ENCODE measurements at regions of chr12 and their contacts with region 1.

Region 1: GRCh38 chr12:16939871-16940306 is 333.9 kb upstream of the LMO3 start:
- DNase-seq: peak; percentile 56 to 94
- ATAC-seq: peak; percentile 85 to 97; a peak in 5 of 6 replicates
- H3K4me3 ChIP-seq: no peak overlapping the region
- H3K27ac ChIP-seq: peak overlapping the region; percentile 3 to 54; a peak in 2 of 6 replicates
- H3K4me1 ChIP-seq: no peaks in the 10 kb centered on the region
- CTCF ChIP-seq: peak; percentile 78
- EP300 ChIP-seq: no peak
- POLR2A ChIP-seq: no peak
- RAD21 ChIP-seq: peak; percentile 82 to 95

Region 2: DNA sequence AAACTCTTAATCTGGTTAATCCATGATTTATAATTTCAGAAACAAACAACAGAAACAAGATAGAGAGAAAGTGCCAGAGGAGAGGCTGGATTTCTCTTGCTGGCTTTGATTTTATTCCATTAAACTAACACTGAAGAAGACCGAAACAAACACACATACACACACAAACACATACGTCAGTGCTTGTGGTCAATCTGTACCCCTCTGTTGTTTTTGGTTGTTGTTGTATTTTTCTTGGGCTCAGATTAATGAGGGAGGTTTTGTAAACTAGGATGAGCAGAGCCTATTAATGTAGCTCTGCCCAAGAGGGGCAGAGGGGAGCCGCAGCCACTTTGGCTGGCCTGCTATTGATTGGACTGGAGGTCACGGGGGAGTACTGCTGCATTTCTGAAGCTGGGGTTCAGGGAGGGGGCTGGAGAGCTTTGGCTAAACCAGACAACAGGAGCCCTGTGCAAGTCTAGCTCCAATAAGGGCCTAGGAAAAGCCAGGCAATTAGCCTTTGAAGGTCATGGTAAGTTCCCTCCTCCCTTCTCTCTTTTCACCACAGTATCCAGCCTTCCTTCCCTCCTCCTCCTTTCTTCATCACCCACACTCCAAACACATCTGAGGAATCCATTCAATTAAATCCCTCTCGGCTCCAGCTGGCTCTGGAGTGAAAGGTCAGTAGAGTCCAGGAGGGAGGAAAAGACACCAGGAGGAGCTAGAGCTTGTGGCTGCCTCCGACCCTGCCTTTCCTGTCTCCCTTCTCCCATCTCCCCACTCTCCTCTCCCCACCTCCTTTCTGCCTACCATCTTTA is 10.2 kb after region 1 on chr12:
- CTCF ChIA-PET with region 1: interaction called, 10 read pairs
- POLR2A ChIA-PET with region 1: no interaction called
- DNase-seq: no peak
- ATAC-seq: no peak
- H3K4me3 ChIP-seq: no peak overlapping the region
- H3K27ac ChIP-seq: no peak overlapping the region
- H3K4me1 ChIP-seq: peaks cover 6% of the 10 kb centered on the region
- CTCF ChIP-seq: no peak
- EP300 ChIP-seq: no peak
- POLR2A ChIP-seq: no peak
- RAD21 ChIP-seq: no peak

Region 3: DNA sequence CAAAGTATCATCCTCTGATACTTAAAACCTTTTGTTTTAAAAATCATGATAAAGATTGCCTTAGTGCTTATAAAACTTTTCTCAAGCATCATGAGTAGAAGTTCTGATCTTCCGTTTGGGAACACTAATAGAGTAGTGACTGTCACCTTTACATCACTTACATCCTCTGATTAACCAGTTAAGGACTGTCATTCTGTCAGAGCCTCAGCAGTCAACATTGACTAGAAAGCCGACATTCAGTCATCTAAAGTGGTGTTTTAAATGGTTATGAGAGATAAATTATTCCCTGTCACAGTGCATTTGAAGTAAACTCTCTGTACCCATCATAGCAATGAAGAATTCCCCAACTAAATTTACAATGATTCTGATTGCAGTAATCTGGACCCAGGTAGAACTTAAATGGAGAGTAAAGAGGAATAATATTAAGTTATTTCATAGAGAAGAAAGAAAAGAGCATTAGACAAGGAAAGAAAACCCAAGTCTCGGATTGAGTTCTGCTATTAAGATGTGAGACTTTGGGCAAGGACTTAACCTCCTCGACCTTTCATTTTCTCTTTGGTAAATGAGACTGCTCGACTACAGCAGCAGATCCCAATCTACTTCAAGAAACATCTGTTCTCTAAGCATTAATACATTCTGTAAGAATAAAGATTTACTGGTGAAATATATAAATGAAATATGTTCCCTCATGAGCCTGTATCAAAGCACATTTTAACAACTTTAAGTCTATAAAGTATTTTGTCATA is 230.0 kb after region 1 on chr12:
- CTCF ChIA-PET with region 1: no interaction called
- POLR2A ChIA-PET with region 1: no interaction called
- DNase-seq: no peak
- ATAC-seq: no peak
- H3K4me3 ChIP-seq: no peak overlapping the region
- H3K27ac ChIP-seq: no peak overlapping the region
- H3K4me1 ChIP-seq: no peaks in the 10 kb centered on the region
- CTCF ChIP-seq: no peak
- EP300 ChIP-seq: no peak
- POLR2A ChIP-seq: no peak
- RAD21 ChIP-seq: no peak

Region 4: DNA sequence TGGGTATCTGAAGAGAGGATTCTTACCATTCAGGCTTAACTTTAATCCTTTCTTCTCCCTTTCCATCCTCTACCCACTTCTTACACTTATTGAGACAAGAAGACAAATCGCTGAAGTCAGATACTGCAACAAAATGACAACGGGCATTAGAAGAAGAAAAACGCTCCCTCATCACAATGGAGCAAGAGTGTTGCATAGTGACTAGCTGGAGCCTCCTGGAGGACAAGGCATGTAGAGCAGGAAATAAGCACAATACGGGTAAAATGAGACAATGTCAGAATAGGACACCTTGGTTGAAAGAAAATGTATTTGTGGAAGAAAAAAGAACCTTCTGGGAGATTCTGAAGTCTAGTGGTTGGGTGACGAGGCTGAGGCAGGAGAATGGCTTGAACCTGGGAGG is 649.1 kb after region 1 on chr12:
- CTCF ChIA-PET with region 1: interaction called, 11 read pairs
- POLR2A ChIA-PET with region 1: no interaction called
- DNase-seq: peak; percentile 16 to 80
- ATAC-seq: peak; percentile 90 to 96
- H3K4me3 ChIP-seq: no peak overlapping the region; the same call in 2 of the 3 replicates
- H3K27ac ChIP-seq: peak overlapping the region; percentile 26 to 43; a peak in 1 of 6 replicates
- H3K4me1 ChIP-seq: no peaks in the 10 kb centered on the region
- CTCF ChIP-seq: peak; percentile 71
- EP300 ChIP-seq: no peak
- POLR2A ChIP-seq: no peak
- RAD21 ChIP-seq: peak; percentile 87 to 91

Measured in A549 (cell line).